ENCODE measurements at regions of chr13 and their contacts with region 1.

Region 1: GRCh38 chr13:95608640-95609280 is 35.7 kb downstream of the DZIP1 start:
- DNase-seq: peak in 2 of 3 donors; percentile 18 to 45
- H3K4me3 ChIP-seq: no peak overlapping the region
- H3K27ac ChIP-seq: no peak overlapping the region
- H3K4me1 ChIP-seq: peaks cover 0 to 6% (median 2%) of the 10 kb centered on the region in 4 experiments
- H3K27me3 ChIP-seq: no peaks in the 10 kb centered on the region

Region 2: GRCh38 chr13:95624020-95624419 is 15.3 kb after region 1 on chr13:
- CTCF ChIA-PET with region 1: interaction called, 17 read pairs
- POLR2A ChIA-PET with region 1: no interaction called
- DNase-seq: peak; percentile 49 to 73 (median 68)
- H3K4me3 ChIP-seq: no peak overlapping the region
- H3K27ac ChIP-seq: no peak overlapping the region
- H3K4me1 ChIP-seq: peaks cover 0 to 19% (median 9%) of the 10 kb centered on the region in 4 experiments
- H3K27me3 ChIP-seq: no peaks in the 10 kb centered on the region

Region 3: DNA sequence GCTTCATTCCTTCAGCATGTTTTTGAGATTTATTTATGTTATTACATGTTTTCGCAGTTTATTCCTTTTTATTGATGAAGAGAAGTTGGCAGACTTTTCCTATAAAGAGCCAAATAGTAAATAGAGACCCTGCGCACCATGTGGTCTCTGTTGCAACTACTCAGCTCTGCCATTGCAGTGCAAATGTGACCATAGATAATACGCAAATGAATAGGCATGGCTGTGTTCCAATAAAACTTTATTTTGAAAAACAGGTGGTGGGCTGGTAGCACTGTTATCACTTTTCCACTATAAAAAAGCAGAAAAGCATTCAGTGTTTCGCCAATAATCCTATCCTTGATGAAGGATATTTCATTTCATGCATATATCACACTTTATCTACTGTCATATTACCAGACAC is 163.1 kb after region 1 on chr13:
- CTCF ChIA-PET with region 1: no interaction called
- POLR2A ChIA-PET with region 1: no interaction called
- DNase-seq: no peak
- H3K4me3 ChIP-seq: no peak overlapping the region
- H3K27ac ChIP-seq: no peak overlapping the region
- H3K4me1 ChIP-seq: peaks cover 0 to 12% (median 6%) of the 10 kb centered on the region in 4 experiments
- H3K27me3 ChIP-seq: no peaks in the 10 kb centered on the region

Measured in common myeloid progenitor, CD34-positive (primary cell).